Heart left ventricle (tissue), 16 donors: ENCODE measurements at regions of chr12 and their contacts with region 1.

Region 1: DNA sequence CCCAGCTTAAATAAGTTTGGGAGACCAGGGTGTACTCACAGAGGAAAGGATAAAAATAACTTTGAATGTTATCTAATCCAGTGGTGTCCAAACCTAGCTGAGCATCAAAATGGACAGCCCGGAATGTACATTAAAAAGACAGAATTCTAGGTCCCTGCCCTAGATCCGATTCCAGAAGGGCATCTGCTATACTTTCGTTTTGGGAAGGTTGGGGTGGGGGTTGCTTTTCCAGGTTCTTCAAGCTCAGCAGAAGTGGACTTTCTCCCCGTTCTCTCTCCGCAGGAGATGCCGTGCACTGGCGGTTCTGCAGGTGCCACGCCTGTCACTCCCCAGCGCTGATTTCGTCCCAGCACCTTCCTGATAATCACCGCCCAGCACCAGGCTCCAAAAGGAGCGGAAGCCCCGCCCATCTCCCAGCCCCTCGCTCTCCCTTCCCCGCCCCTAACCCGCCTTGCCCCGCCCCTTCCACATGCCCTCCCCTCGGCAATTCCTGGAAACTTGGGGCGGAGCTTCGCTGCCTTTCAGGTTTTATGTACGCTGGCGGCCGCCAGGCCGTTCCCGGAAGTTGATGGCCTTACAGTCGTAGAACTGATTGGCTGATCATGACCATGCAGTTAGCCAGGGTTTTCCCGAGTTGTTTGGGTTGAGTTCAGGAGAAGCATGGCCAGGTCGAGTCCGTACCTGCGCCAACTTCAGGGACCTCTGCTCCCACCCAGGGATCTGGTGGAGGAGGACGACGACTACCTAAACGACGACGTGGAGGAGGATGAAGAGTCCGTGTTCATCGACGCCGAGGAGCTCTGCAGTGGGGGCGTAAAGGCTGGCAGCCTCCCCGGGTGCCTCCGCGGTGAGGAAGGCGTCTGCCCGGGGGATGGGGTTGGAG is at the start of gene HELB:
- DNase-seq: peak; percentile 97 to 99 (median 98)
- ATAC-seq: peak; percentile 99 to 100 (median 100)
- H3K4me3 ChIP-seq: peak within 1 kb of the TSS; percentile 46 to 80 (median 72)
- H3K27ac ChIP-seq: peak within 1 kb of the TSS in 11 of 12 donors; percentile 47 to 93 (median 80)
- H3K4me1 ChIP-seq: peaks cover 0 to 26% (median 10%) of the 10 kb centered on the region in 12 donors
- H3K27me3 ChIP-seq: no peaks in the 10 kb centered on the region
- CTCF ChIP-seq: no peak
- POLR2A ChIP-seq: peak in 1 of 2 donors; percentile 40
- total RNA-seq, gene HELB: 0.32 to 4.3 (median 1.1) TPM

Region 2: DNA sequence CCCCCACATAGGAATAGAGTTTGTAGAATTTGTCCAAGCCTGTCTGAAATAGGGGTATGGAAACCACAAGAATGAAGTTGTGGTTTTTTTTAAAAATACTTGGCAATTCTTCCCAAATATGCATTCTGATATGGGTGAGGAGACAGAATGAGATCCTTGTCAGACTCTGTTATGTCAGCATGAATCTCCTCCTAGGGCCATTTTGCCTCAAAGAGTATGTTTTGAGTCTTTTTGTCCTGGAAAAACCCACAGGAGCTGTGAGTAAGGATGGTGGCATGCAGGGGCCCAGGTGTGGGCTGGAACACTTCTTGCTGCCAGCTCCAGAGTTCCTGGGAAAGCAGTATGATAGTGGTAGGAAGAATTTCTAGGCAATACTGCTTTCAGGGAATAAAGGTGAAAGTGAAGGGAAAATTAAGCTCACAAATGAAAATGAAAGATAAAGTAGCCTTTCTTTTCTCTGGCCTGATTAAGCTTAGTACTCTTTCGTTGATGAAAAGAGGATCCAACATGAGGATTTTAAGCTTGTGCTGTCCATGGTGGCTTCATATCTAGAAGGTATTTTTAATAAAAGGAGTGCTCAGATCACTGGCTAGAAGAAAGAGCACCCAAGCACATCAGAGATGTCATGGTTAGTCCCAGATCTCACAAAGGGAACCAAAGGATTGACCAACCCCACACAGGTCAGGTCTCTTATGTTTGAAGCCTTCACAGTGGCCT is 302.5 kb before region 1 on chr12:
- intact Hi-C with region 1: no loop called
- DNase-seq: no peak
- ATAC-seq: no peak
- H3K4me3 ChIP-seq: no peak overlapping the region
- H3K27ac ChIP-seq: no peak overlapping the region
- H3K4me1 ChIP-seq: peaks cover 0 to 2% (median 0%) of the 10 kb centered on the region in 12 donors
- H3K27me3 ChIP-seq: no peaks in the 10 kb centered on the region
- CTCF ChIP-seq: no peak
- POLR2A ChIP-seq: no peak

Region 3: DNA sequence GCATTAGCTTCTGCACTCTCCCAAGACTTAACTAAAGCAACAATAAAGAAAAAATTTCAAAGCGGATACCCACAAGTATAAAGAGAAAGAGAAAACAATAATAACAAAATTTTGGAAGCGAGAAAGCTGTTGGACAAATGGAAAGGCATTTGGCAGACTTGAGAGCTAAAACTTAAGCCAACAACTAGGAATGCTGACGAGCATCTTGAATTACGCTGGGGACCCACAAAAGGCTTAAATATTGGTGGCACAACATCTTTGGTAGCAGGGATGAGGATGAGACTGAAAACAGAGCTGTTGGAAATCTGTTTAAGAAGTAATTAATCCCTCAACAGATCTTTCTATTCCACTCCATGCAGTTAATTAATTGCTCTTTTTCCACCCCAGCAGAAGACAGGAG is 221.4 kb before region 1 on chr12:
- intact Hi-C with region 1: no loop called
- DNase-seq: no peak
- ATAC-seq: no peak
- H3K4me3 ChIP-seq: no peak overlapping the region
- H3K27ac ChIP-seq: no peak overlapping the region
- H3K4me1 ChIP-seq: no peaks in the 10 kb centered on the region
- H3K27me3 ChIP-seq: peaks cover 0 to 4% (median 0%) of the 10 kb centered on the region in 9 donors
- CTCF ChIP-seq: no peak
- POLR2A ChIP-seq: no peak

Region 4: GRCh38 chr12:66130277-66131066 is 171.7 kb before region 1 on chr12 and contains the start of gene LLPH:
- intact Hi-C with region 1: loop called in 1 of 10 experiments (anchors 5 kb)
- DNase-seq: peak; percentile 88 to 95 (median 92)
- ATAC-seq: peak; percentile 92 to 96 (median 96)
- H3K4me3 ChIP-seq: peak within 1 kb of the TSS; percentile 58 to 96 (median 74)
- H3K27ac ChIP-seq: peak within 1 kb of the TSS in 11 of 12 donors; percentile 56 to 91 (median 80)
- H3K4me1 ChIP-seq: peaks cover 0 to 45% (median 29%) of the 10 kb centered on the region in 12 donors
- H3K27me3 ChIP-seq: no peaks in the 10 kb centered on the region
- CTCF ChIP-seq: peak in 1 of 12 donors; percentile 7
- POLR2A ChIP-seq: peak in 1 of 2 donors; percentile 52
- total RNA-seq, gene LLPH: 5.0 to 36.4 (median 18.3) TPM

Region 5: GRCh38 chr12:66144791-66145754 is 157.1 kb before region 1 on chr12:
- intact Hi-C with region 1: loop called in 3 of 10 experiments (anchors 5 to 10 kb)
- DNase-seq: peak in 2 of 5 donors; percentile 32 to 46
- ATAC-seq: peak; percentile 56 to 86 (median 84)
- H3K4me3 ChIP-seq: no peak overlapping the region
- H3K27ac ChIP-seq: peak overlapping the region in 11 of 12 donors; percentile 20 to 80 (median 62)
- H3K4me1 ChIP-seq: peaks cover 3 to 42% (median 19%) of the 10 kb centered on the region in 12 donors
- H3K27me3 ChIP-seq: no peaks in the 10 kb centered on the region
- CTCF ChIP-seq: peak in 11 of 12 donors; percentile 45 to 77 (median 68)
- POLR2A ChIP-seq: no peak

Region 6: DNA sequence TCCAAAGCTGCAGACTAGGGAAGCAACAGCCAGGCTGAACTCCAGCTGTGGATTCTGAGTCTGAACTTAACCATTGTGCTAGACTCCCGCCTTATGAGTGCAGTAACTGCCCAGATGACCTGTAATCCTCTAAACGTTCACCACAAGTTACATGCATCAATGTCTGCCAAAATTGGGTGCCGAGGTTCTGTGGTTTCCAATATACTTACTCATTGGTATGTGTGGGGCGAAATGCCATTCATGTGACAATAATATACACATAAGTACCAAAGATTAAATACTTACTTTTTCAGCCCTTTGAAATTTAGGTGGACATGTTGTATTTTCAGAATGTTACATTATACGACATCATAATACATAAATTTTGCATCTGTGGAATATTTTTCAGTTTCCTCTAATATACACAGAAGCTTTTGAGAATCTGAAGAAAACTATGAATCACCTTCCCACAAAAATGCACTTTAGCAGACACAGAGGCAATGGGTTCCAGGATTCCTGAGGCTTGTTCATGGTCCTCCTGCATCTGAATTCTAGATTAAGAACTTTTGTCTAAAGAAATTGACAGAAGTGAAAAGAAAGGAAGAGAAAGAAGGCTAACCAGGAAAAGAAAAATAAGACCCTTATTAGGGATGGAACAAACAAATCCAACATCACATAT is 345.0 kb after region 1 on chr12:
- intact Hi-C with region 1: no loop called
- DNase-seq: no peak
- ATAC-seq: no peak
- H3K4me3 ChIP-seq: no peak overlapping the region
- H3K27ac ChIP-seq: no peak overlapping the region
- H3K4me1 ChIP-seq: no peaks in the 10 kb centered on the region
- H3K27me3 ChIP-seq: no peaks in the 10 kb centered on the region
- CTCF ChIP-seq: no peak
- POLR2A ChIP-seq: no peak